ENCODE measurements at regions of chr1 and their contacts with region 1.

Region 1: GRCh38 chr1:9267352-9267686 is 25.4 kb upstream of the SPSB1 start:
- DNase-seq: no peak
- ATAC-seq: no peak
- H3K4me3 ChIP-seq: no peak overlapping the region
- H3K27ac ChIP-seq: peak overlapping the region; percentile 7 to 64 (median 46)
- H3K4me1 ChIP-seq: peaks cover 42 to 52% of the 10 kb centered on the region in 2 donors
- H3K27me3 ChIP-seq: no peaks in the 10 kb centered on the region
- CTCF ChIP-seq: peak in 3 of 5 experiments; percentile 3 to 9 (median 5)
- POLR2A ChIP-seq: no peak

Region 2: GRCh38 chr1:9181176-9181906 is 86.0 kb before region 1 on chr1:
- in situ Hi-C with region 1: no loop called
- intact Hi-C with region 1: loop called (anchors 1 kb)
- DNase-seq: peak in 1 of 2 donors; percentile 52
- ATAC-seq: peak; percentile 44 to 84
- H3K4me3 ChIP-seq: peak overlapping the region; percentile 60 to 76 (median 64)
- H3K27ac ChIP-seq: no peak overlapping the region
- H3K4me1 ChIP-seq: peaks cover 0 to 3% of the 10 kb centered on the region in 2 donors
- H3K27me3 ChIP-seq: peaks cover 0 to 8% (median 8%) of the 10 kb centered on the region in 3 donors
- CTCF ChIP-seq: peak; percentile 70 to 97 (median 94)
- POLR2A ChIP-seq: no peak

Region 3: DNA sequence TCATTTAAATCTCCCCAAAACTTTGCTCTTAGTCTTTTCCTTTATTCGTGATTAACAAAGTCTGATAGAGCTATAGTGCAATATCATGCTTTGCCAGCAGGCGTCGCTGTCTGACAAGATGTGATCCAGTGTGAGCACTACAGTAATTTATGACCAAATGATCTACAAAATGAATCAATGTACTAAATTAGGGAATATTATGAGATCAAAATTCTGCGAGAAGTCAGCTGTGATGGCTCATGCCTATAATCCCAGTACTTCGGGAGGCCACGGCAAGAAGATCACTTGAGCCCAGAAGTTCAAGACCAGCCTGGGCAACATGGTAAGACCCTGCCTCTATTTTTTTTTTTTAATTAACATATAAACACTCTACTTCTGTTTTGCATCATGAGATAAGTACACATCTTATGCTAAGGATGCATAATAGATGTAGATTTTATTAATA is 21.8 kb after region 1 on chr1:
- in situ Hi-C with region 1: no loop called
- intact Hi-C with region 1: no loop called
- DNase-seq: peak in 1 of 2 donors; percentile 70
- ATAC-seq: no peak
- H3K4me3 ChIP-seq: no peak overlapping the region
- H3K27ac ChIP-seq: peak overlapping the region; percentile 80 to 95 (median 90)
- H3K4me1 ChIP-seq: peaks cover 13 to 14% of the 10 kb centered on the region in 2 donors
- H3K27me3 ChIP-seq: no peaks in the 10 kb centered on the region
- CTCF ChIP-seq: peak; percentile 85 to 99 (median 95)
- POLR2A ChIP-seq: no peak

Region 4: GRCh38 chr1:9455487-9456234 is 188.3 kb after region 1 on chr1:
- in situ Hi-C with region 1: no loop called
- intact Hi-C with region 1: loop called (anchors 1 kb)
- DNase-seq: peak in 1 of 2 donors; percentile 63
- ATAC-seq: peak; percentile 50 to 67
- H3K4me3 ChIP-seq: peak overlapping the region in 1 of 4 donors; percentile 15
- H3K27ac ChIP-seq: peak overlapping the region in 3 of 4 donors; percentile 15 to 32 (median 27)
- H3K4me1 ChIP-seq: peaks cover 13 to 16% of the 10 kb centered on the region in 2 donors
- H3K27me3 ChIP-seq: no peaks in the 10 kb centered on the region
- CTCF ChIP-seq: peak; percentile 78 to 94 (median 89)
- POLR2A ChIP-seq: no peak

Measured in gastrocnemius medialis (tissue), 4 donors.